Mammary epithelial cell (primary cell): ENCODE measurements at regions of chr4 and their contacts with region 1.

Region 1: GRCh38 chr4:57074744-57075143 is 35.4 kb downstream of the IGFBP7 start:
- DNase-seq: peak; percentile 95
- H3K4me3 ChIP-seq: no peak overlapping the region
- H3K27ac ChIP-seq: peak overlapping the region; percentile 88
- H3K4me1 ChIP-seq: peaks cover 79% of the 10 kb centered on the region
- H3K27me3 ChIP-seq: no peaks in the 10 kb centered on the region
- CTCF ChIP-seq: peak in 1 of 2 donors; percentile 1

Region 2: DNA sequence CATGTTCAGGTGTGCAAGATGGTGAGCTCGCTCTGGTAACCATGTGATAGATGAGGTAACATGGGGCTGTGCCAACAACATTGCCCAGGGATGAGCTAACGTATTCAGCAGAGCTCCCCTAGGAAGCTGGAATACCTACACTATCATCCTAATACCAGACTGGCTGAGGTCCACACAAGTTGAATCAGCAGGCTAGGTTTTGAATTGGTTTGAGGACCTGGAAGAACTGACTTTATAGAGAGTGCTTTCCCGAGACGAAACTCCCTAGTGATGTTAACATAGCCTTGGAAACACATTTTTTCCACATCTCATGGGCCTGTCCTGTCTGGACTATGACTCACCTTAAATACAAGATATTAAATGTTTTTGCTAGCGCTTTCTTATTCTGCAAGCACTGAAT is 21.2 kb before region 1 on chr4:
- CTCF ChIA-PET with region 1: no interaction called
- dilution Hi-C with region 1: no loop called
- in situ Hi-C with region 1: no loop called
- intact Hi-C with region 1: loop called (anchors 2 kb)
- DNase-seq: peak; percentile 96
- H3K4me3 ChIP-seq: no peak overlapping the region
- H3K27ac ChIP-seq: peak overlapping the region; percentile 79
- H3K4me1 ChIP-seq: peaks cover 23% of the 10 kb centered on the region
- H3K27me3 ChIP-seq: no peaks in the 10 kb centered on the region
- CTCF ChIP-seq: no peak

Region 3: GRCh38 chr4:57147335-57148060 is 72.8 kb after region 1 on chr4:
- CTCF ChIA-PET with region 1: no interaction called
- dilution Hi-C with region 1: no loop called
- in situ Hi-C with region 1: no loop called
- intact Hi-C with region 1: loop called (anchors 5 kb)
- DNase-seq: no peak
- H3K4me3 ChIP-seq: no peak overlapping the region
- H3K27ac ChIP-seq: no peak overlapping the region
- H3K4me1 ChIP-seq: peaks cover 29% of the 10 kb centered on the region
- H3K27me3 ChIP-seq: no peaks in the 10 kb centered on the region
- CTCF ChIP-seq: no peak